ENCODE measurements at regions of chr18 and their contacts with region 1.

Region 1: DNA sequence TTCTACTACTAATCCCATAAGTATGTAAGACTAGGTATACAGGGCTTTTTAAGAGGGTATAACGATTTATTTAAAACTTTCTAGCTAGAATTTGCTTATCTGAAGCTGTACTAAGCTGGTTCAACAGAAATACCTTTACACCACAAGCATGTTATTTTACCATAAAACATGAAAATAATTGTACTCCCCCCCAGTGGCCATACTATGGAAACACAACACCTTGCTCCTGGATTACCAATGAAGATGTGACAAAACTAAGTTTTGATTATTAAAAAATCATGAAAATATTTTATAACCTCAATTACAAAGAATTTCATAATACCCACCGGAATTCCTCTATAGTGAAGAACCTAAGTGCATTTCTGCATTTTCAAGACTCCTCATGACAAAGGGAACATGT is 27.3 kb downstream of the LPIN2 start:
- DNase-seq: peak; percentile 32
- ATAC-seq: peak; percentile 53
- H3K4me3 Mint-ChIP-seq: no peak overlapping the region
- H3K27ac Mint-ChIP-seq: peak overlapping the region; percentile 34
- H3K4me1 Mint-ChIP-seq: peaks cover 72% of the 10 kb centered on the region
- H3K27me3 Mint-ChIP-seq: no peaks in the 10 kb centered on the region
- CTCF ChIP-seq: peak; percentile 74

Region 2: GRCh38 chr18:2293109-2293839 is 692.4 kb before region 1 on chr18:
- CTCF ChIA-PET with region 1: no interaction called
- POLR2A ChIA-PET with region 1: no interaction called
- intact Hi-C with region 1: no loop called
- DNase-seq: peak; percentile 27
- ATAC-seq: no peak
- H3K4me3 Mint-ChIP-seq: no peak overlapping the region
- H3K27ac Mint-ChIP-seq: no peak overlapping the region
- H3K4me1 Mint-ChIP-seq: no peaks in the 10 kb centered on the region
- H3K27me3 Mint-ChIP-seq: peaks cover 15% of the 10 kb centered on the region
- CTCF ChIP-seq: no peak

Region 3: DNA sequence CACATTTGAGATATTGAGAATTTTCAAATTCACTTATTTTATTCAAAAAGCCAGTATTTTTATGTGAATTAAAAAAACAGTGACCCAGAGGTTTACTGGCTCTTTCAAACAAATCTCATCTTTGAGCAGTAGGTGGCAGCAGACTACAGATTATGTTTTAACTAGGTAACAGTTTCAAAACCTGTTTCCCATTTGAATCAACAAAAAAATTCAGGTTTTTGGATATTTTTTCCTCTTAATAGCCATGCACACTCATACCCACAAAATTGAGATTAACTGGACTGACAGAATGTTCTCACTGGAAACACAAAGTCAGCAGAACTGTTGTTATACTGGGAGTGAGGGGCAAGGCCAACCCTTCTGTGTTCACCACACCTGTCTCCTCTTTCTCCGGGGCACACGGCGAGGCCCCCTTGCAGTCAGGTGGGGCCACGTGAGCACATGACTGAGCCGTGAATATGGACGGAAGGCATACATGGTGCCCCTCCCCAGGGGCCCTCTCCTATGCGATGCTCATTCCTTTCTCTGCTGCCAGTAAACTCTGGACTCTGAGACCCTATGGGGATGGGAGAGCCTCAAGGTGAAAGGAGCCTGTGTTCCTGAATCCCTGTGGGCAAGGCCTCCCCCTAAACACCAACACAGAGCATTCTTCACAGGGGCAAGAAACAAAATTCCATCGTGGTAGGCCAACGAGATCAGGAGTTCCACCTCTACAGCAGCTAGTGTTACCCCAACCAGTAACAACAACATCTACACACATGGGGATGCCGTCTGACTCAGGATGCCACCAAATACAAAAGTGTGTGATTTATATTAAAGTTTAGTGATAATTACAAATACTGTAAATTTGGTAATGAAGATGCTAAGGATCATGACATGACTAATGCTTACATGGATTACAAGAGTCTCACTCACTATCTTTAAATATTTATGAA is 53.1 kb before region 1 on chr18:
- CTCF ChIA-PET with region 1: interaction called, 77 read pairs
- POLR2A ChIA-PET with region 1: interaction called, 5 read pairs
- intact Hi-C with region 1: loop called (anchors 2 kb)
- DNase-seq: peak; percentile 56
- ATAC-seq: peak; percentile 71
- H3K4me3 Mint-ChIP-seq: no peak overlapping the region
- H3K27ac Mint-ChIP-seq: peak overlapping the region; percentile 79
- H3K4me1 Mint-ChIP-seq: peaks cover 43% of the 10 kb centered on the region
- H3K27me3 Mint-ChIP-seq: no peaks in the 10 kb centered on the region
- CTCF ChIP-seq: peak; percentile 88

Region 4: GRCh38 chr18:2948038-2948437 is 37.6 kb before region 1 on chr18:
- CTCF ChIA-PET with region 1: interaction called, 45 read pairs
- POLR2A ChIA-PET with region 1: interaction called, 3 read pairs
- intact Hi-C with region 1: no loop called
- DNase-seq: no peak
- ATAC-seq: peak; percentile 47
- H3K4me3 Mint-ChIP-seq: no peak overlapping the region
- H3K27ac Mint-ChIP-seq: no peak overlapping the region
- H3K4me1 Mint-ChIP-seq: peaks cover 47% of the 10 kb centered on the region
- H3K27me3 Mint-ChIP-seq: no peaks in the 10 kb centered on the region
- CTCF ChIP-seq: no peak

Region 5: DNA sequence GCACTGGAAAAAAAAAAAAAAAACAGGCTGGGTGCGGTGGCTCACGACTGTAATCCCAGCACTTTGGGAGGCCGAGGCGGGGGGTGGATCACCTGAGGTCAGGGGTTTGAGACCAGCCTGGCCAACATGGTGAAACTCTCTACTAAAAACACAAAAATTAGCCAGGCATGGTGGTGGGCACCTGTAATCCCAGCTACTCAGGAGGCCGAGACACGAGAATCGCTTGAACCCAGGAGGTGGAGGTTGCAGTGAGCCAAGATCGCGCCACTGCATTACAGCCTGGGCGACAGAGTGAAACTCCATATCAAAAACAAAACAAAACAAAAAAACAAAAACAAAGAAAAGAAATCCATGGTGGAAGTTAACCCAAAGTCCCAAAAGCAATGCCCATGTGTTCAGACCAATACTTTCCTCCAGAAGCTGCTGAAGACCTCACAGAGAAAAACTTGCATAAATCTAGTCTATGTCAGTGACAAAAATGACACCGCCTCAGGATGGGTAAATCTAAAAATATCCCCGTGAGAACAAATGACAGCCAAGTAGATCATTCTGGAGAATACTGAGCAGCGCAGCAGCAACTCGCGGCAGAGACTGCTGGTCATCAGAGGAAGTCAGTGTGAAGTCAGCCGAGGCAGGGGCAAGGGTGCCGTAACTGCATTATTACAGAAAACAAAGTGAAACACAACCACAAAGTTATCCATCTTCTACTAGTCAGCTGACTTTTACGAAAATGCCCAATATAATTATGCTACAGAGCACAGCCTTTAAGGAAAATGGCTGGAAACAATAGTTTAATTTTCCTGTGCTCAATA is 13.7 kb before region 1 on chr18:
- CTCF ChIA-PET with region 1: interaction called, 44 read pairs
- POLR2A ChIA-PET with region 1: interaction called, 86 read pairs
- intact Hi-C with region 1: no loop called
- DNase-seq: peak; percentile 88
- ATAC-seq: peak; percentile 78
- H3K4me3 Mint-ChIP-seq: peak overlapping the region; percentile 81
- H3K27ac Mint-ChIP-seq: peak overlapping the region; percentile 99
- H3K4me1 Mint-ChIP-seq: peaks cover 91% of the 10 kb centered on the region
- H3K27me3 Mint-ChIP-seq: no peaks in the 10 kb centered on the region
- CTCF ChIP-seq: no peak

Measured in activated CD8-positive, alpha-beta T cell treated with anti-CD3 and anti-CD28 coated beads for 36 hours (primary cell).